HepG2 (cell line): ENCODE measurements at regions of chr17 and their contacts with region 1.

Region 1: GRCh38 chr17:48047741-48048383 is at the start of gene NFE2L1:
- DNase-seq: peak; percentile 99
- ATAC-seq: peak; percentile 91
- H3K4me3 ChIP-seq: peak within 1 kb of the TSS; percentile 81 to 88 (median 85)
- H3K27ac ChIP-seq: peak within 1 kb of the TSS; percentile 97
- H3K4me1 ChIP-seq: peaks cover 62% of the 10 kb centered on the region
- H3K27me3 ChIP-seq: peaks cover 0 to 2% of the 10 kb centered on the region in 2 experiments; a peak in 3 of 5 replicates
- CTCF ChIP-seq: no peak
- EP300 ChIP-seq: 0 out of 4 replicates have a peak, but pooled peaks of 1 of the 2 experiments have one; percentile 2
- POLR2A ChIP-seq: peak in 1 of 2 experiments; percentile 78; a peak in 2 of 4 replicates
- RAD21 ChIP-seq: no peak
- total RNA-seq, gene NFE2L1: 53.7 and 67.0 TPM in 2 replicates

Region 2: GRCh38 chr17:47895856-47896671 is 151.8 kb before region 1 on chr17 and contains the start of gene SP2:
- CTCF ChIA-PET with region 1: no interaction called
- POLR2A ChIA-PET with region 1: interaction called, 10 read pairs
- in situ Hi-C with region 1: no loop called
- intact Hi-C with region 1: no loop called
- DNase-seq: peak; percentile 100
- ATAC-seq: peak; percentile 95
- H3K4me3 ChIP-seq: peak within 1 kb of the TSS; percentile 79 to 96 (median 83)
- H3K27ac ChIP-seq: peak within 1 kb of the TSS; percentile 88
- H3K4me1 ChIP-seq: peaks cover 37% of the 10 kb centered on the region
- H3K27me3 ChIP-seq: no peaks in the 10 kb centered on the region; a peak in 1 of 5 replicates
- CTCF ChIP-seq: peak; percentile 23; the same call in 1 of the 2 replicates
- EP300 ChIP-seq: no peak
- POLR2A ChIP-seq: peak; percentile 74 to 91
- RAD21 ChIP-seq: peak; percentile 69
- total RNA-seq, gene SP2: 1.4 and 1.5 TPM in 2 replicates

Region 3: DNA sequence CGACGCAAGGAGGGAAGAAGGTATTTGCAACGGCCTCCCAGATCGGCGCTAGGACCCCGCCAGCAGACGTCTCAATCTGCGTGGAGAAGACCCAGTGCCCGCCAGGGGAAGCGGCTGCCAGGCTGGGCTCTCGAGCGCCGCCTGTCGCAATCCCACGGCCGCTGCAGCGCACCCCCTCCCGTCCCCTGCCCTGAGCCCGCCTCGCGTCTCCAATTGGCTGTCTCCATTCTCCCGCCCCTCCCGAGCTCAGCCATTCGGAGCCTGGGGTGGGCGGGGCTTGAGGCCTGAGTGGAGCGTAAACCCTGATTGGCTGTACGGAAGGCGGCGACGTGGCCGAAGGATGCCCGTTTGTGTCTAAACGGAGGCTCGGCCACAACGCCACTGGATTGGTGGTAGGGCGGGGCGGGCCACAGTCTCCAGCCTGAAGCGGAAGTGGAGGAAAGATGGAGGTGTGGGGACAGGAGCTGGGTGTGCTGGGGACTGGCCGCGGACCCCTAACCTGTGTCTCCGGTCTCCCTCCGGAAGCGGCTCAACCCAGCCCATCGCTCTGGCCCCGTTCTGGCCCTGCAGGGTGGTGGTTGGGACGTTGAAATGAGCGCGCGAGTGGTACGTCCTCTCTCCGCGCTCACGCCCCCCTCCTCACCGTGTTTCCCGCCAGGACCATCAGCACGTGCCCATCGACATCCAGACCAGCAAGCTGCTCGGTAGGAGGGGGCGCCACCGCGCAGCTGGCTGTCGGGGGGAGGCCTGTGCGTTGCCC is 77.0 kb before region 1 on chr17 and contains the start of gene CDK5RAP3:
- CTCF ChIA-PET with region 1: no interaction called
- POLR2A ChIA-PET with region 1: interaction called, 15 read pairs
- in situ Hi-C with region 1: no loop called
- intact Hi-C with region 1: no loop called
- DNase-seq: peak; percentile 99
- ATAC-seq: peak; percentile 97
- H3K4me3 ChIP-seq: peak within 1 kb of the TSS; percentile 66 to 95 (median 92)
- H3K27ac ChIP-seq: peak within 1 kb of the TSS; percentile 63
- H3K4me1 ChIP-seq: peaks cover 51% of the 10 kb centered on the region
- H3K27me3 ChIP-seq: no peaks in the 10 kb centered on the region; a peak in 1 of 5 replicates
- CTCF ChIP-seq: peak; percentile 100
- EP300 ChIP-seq: 0 out of 4 replicates have a peak, but pooled peaks of 1 of the 2 experiments have one; percentile 62
- POLR2A ChIP-seq: peak; percentile 92 to 95
- RAD21 ChIP-seq: peak; percentile 99
- total RNA-seq, gene CDK5RAP3: 86.8 and 128 TPM in 2 replicates

Region 4: DNA sequence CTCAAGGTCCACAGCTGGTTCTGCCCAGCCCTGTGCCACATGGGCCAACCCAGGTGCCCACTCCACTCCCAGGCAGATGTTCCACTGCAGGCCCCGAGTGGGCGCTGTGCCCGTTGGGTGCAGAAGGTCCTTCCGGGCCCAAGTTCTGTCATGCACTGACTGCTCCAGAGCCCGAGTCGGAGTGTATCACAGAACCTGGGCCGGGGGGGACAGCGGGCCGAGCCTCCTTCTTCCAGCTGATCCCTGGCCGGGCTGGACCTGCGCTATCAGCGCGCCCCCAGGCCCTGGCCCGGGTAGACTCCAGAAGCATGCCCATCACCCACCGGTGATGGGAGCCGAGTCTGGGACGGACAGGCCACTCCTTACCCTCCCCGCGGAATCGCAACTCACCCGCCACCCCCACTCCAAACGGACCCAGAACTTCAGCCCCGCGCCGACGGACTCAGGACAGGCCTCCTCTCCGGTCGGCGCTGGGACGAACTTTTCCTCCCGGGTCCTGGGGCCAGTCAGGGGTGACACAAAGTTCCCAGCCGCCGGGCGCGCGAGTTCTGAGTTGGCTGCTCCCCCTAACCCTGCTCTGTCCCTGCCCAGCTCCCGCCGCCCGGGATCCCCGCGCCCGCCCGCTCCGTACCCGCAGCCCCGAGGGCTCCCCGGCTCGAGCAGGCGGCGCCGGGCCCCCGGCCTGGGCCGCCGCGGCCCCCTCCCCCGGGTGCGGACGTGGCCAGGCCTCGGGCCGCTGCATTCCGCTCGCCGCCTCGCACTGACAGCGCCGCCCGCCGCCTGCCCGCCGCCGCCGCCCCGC is 10.6 kb before region 1 on chr17 and contains the start of gene COPZ2:
- CTCF ChIA-PET with region 1: no interaction called
- POLR2A ChIA-PET with region 1: interaction called, 25 read pairs
- in situ Hi-C with region 1: no loop called
- intact Hi-C with region 1: no loop called
- DNase-seq: peak; percentile 50
- ATAC-seq: peak; percentile 89
- H3K4me3 ChIP-seq: peak within 1 kb of the TSS; percentile 74 to 86 (median 82)
- H3K27ac ChIP-seq: no peak within 1 kb of the TSS
- H3K4me1 ChIP-seq: peaks cover 27% of the 10 kb centered on the region
- H3K27me3 ChIP-seq: peaks cover 1 to 54% of the 10 kb centered on the region in 2 experiments; a peak in 4 of 5 replicates
- CTCF ChIP-seq: peak; percentile 85
- EP300 ChIP-seq: no peak
- POLR2A ChIP-seq: no peak
- RAD21 ChIP-seq: peak; percentile 75
- total RNA-seq, gene COPZ2: 0.74 and 1.5 TPM in 2 replicates

Region 5: DNA sequence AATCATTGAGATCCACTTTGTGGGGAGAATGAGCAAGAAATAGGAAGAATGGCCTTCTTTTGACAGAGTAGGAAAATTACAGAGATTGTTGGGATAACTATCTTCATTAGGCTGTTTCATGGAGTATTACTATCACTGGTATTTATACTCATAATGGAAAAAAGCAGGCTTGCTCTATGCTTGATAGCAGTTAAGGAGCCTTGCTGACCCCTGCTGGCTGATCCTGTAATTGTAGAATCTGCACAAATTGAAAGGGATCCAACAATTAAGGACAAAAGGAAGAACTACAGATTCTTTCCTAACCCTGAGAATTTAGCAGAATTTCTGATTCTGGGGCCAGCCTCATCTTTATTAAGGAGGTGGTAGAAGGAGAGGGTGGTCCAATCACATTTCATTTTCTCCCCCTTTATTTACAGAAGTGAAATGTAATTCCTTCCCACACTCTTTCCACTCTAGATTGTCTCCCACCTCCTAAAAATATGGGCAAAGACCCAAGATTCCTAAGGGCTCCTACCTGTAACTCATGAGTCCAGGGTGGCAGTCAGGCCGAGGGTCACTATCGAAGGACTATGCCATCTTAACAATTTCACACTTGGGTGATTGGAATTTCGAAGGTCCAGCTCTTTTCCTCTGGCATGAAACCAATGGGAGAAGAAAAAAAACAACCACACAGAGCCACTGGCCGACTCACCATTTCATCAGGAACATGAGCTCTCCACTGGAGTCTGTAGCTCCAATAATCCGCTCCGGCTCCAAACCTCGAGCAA is 26.6 kb after region 1 on chr17:
- CTCF ChIA-PET with region 1: interaction called, 7 read pairs
- POLR2A ChIA-PET with region 1: interaction called, 30 read pairs
- in situ Hi-C with region 1: no loop called
- intact Hi-C with region 1: loop called (anchors 2 kb)
- DNase-seq: peak; percentile 75
- ATAC-seq: peak; percentile 86
- H3K4me3 ChIP-seq: no peak overlapping the region
- H3K27ac ChIP-seq: no peak overlapping the region
- H3K4me1 ChIP-seq: 0 out of 2 replicates have a peak, but pooled peaks cover 8% of the 10 kb centered on the region
- H3K27me3 ChIP-seq: no peaks in the 10 kb centered on the region
- CTCF ChIP-seq: peak; percentile 87
- EP300 ChIP-seq: no peak
- POLR2A ChIP-seq: no peak
- RAD21 ChIP-seq: peak; percentile 89

Region 6: DNA sequence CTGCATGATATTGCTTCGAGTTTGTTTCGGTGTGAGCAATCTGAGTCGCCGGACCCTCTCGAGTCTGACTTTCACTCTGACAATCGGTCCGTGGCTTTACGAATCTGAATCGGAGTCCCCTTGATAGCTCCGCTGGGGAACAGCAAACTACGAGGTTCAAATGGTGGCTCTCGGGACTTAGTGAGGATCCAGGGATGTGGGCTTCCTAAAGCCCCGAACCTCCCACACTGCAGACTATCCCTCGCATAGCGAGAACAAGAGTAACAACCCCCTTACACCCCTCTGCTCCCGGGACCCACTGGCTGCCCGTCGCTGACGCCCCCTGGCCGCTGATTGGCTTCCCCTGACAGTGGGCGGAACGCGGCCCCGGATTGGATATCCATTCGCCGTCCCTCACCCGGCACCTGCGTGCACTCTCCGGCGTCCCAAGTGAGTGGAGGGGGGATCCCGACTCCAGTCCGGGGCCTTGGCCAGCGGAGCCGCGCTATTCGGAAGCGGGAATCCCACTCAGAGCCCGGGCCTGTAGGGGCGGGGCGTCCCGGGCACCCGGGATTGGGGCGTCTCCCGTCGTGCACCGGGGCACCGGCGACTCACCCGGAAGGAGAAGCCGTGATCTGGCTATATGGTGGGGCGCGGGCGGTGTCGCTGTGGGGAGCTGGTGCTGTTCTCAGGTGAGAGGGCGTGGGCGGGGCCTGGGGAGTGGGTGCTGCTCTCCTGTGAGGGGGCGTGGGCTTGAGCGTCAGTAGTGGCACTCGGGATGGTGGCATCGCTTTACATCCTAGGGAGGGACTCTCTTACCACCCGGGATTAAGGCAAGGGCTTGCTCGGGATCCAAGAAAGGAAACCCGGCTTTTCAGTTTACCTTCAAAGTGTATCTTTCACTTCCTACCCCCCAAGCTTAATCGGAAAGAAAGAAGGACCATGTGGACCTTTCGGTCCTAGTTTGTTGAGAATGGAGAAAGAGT is 59.6 kb after region 1 on chr17 and contains the start of gene SNX11:
- CTCF ChIA-PET with region 1: no interaction called
- POLR2A ChIA-PET with region 1: interaction called, 28 read pairs
- in situ Hi-C with region 1: no loop called
- intact Hi-C with region 1: no loop called
- DNase-seq: peak; percentile 90
- ATAC-seq: peak; percentile 98
- H3K4me3 ChIP-seq: peak within 1 kb of the TSS; percentile 79 to 81 (median 80)
- H3K27ac ChIP-seq: peak within 1 kb of the TSS; percentile 76
- H3K4me1 ChIP-seq: peaks cover 24% of the 10 kb centered on the region
- H3K27me3 ChIP-seq: no peaks in the 10 kb centered on the region; a peak in 2 of 5 replicates
- CTCF ChIP-seq: peak; percentile 65
- EP300 ChIP-seq: peak in 1 of 2 experiments; percentile 13; a peak in 1 of 4 replicates
- POLR2A ChIP-seq: peak; percentile 85 to 94
- RAD21 ChIP-seq: peak; percentile 20; the same call in 1 of the 2 replicates
- total RNA-seq, gene SNX11: 14.0 and 15.9 TPM in 2 replicates